ENCODE measurements at regions of chr10 and their contacts with region 1.

Region 1: DNA sequence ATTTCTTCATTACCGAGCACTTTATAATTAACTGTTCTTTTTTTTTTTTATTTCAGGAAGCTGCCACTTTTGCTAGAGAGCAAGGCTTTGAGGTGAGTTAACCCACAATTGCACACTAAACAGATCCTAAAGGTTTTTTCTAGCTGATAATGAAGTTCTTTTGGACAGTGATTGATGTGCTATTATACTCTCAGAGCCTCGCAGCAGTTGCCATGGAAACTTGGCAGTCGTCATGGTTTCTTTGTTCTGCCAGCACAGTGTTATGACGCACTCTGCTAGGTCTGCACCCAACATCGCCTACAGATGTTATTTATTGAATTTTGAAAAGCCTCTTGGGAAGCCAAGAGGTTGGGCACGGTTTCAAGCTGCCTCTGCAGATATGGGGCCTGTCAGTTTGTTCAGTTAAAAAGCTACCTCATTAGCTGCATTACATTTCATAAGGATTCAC is 237.2 kb upstream of the KAT6B start:
- DNase-seq: peak; percentile 41 to 97 (median 92)
- ATAC-seq: peak; percentile 88
- H3K4me3 ChIP-seq: no peak overlapping the region
- H3K4me3 Mint-ChIP-seq: peak overlapping the region in 8 of 10 donors; percentile 6 to 75 (median 60)
- H3K27ac ChIP-seq: peak overlapping the region; percentile 69
- H3K27ac Mint-ChIP-seq: peak overlapping the region; percentile 70 to 97 (median 93)
- H3K4me1 ChIP-seq: peaks cover 37 to 42% of the 10 kb centered on the region in 2 donors
- H3K4me1 Mint-ChIP-seq: peaks cover 21 to 66% (median 59%) of the 10 kb centered on the region in 7 donors
- H3K27me3 ChIP-seq: no peaks in the 10 kb centered on the region
- H3K27me3 Mint-ChIP-seq: no peaks in the 10 kb centered on the region

Region 2: DNA sequence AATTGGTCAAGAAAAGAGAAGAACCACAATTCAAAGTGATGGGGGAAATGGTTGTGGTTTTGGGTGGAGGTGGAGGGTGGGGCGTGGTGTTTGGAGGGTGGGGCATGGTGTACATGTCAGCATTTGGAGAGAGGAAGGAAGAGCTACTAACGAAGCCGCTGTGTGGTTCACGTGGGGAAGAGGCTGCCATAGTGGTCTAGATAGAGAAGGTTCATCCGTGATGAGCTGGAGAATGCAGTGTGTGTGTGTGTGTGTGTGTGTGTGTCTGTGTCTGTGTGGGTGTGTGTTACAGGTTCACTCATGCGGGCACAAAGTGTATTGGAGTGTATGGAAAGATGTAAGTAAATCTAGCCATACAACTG is 597.4 kb before region 1 on chr10:
- CTCF ChIA-PET with region 1: no interaction called
- POLR2A ChIA-PET with region 1: no interaction called
- intact Hi-C with region 1: loop called (anchors 1 to 10 kb)
- DNase-seq: peak; percentile 31 to 87 (median 79)
- ATAC-seq: peak; percentile 100
- H3K4me3 ChIP-seq: no peak overlapping the region
- H3K4me3 Mint-ChIP-seq: peak overlapping the region; percentile 1 to 72 (median 60)
- H3K27ac ChIP-seq: no peak overlapping the region
- H3K27ac Mint-ChIP-seq: peak overlapping the region; percentile 11 to 88 (median 82)
- H3K4me1 ChIP-seq: peaks cover 20 to 21% of the 10 kb centered on the region in 2 donors
- H3K4me1 Mint-ChIP-seq: peaks cover 26 to 59% (median 42%) of the 10 kb centered on the region in 7 donors
- H3K27me3 ChIP-seq: no peaks in the 10 kb centered on the region
- H3K27me3 Mint-ChIP-seq: no peaks in the 10 kb centered on the region

Region 3: GRCh38 chr10:74176380-74177139 is 412.7 kb before region 1 on chr10:
- CTCF ChIA-PET with region 1: no interaction called
- POLR2A ChIA-PET with region 1: no interaction called
- intact Hi-C with region 1: loop called (anchors 2 to 5 kb)
- DNase-seq: peak; percentile 90 to 96 (median 95)
- ATAC-seq: peak; percentile 98
- H3K4me3 ChIP-seq: peak overlapping the region; percentile 84
- H3K4me3 Mint-ChIP-seq: peak overlapping the region; percentile 87 to 98 (median 93)
- H3K27ac ChIP-seq: peak overlapping the region; percentile 86
- H3K27ac Mint-ChIP-seq: peak overlapping the region; percentile 94 to 98 (median 97)
- H3K4me1 ChIP-seq: peaks cover 6 to 7% of the 10 kb centered on the region in 2 donors
- H3K4me1 Mint-ChIP-seq: peaks cover 14 to 46% (median 40%) of the 10 kb centered on the region in 7 donors
- H3K27me3 ChIP-seq: no peaks in the 10 kb centered on the region
- H3K27me3 Mint-ChIP-seq: no peaks in the 10 kb centered on the region

Region 4: GRCh38 chr10:74213571-74214162 is 375.6 kb before region 1 on chr10:
- CTCF ChIA-PET with region 1: no interaction called
- POLR2A ChIA-PET with region 1: no interaction called
- intact Hi-C with region 1: no loop called
- DNase-seq: peak in 7 of 9 donors; percentile 26 to 60 (median 42)
- ATAC-seq: peak; percentile 78
- H3K4me3 ChIP-seq: no peak overlapping the region
- H3K4me3 Mint-ChIP-seq: no peak overlapping the region
- H3K27ac ChIP-seq: no peak overlapping the region
- H3K27ac Mint-ChIP-seq: peak overlapping the region in 1 of 9 donors; percentile 0
- H3K4me1 ChIP-seq: no peaks in the 10 kb centered on the region
- H3K4me1 Mint-ChIP-seq: peaks cover 7 to 16% (median 12%) of the 10 kb centered on the region in 7 donors
- H3K27me3 ChIP-seq: no peaks in the 10 kb centered on the region
- H3K27me3 Mint-ChIP-seq: no peaks in the 10 kb centered on the region

Region 5: DNA sequence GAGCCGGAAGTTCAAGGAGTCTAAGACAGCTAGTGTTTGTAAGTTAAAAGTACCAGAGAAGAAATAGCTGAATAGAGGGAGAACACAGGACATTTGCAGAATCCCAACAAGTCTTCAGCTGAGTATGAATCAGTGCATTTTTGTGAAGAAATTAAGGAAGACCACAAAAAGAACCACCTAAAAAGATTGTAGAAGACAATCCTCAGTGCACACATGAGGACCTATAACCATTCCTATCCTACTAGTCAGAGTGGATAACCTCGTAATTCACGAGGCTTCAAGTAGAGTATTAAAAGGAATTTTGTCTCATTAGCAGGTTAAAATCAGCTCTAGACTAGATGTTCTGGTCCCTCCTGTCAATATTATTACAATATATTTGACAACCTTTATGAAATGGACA is 58.3 kb before region 1 on chr10:
- CTCF ChIA-PET with region 1: no interaction called
- POLR2A ChIA-PET with region 1: no interaction called
- intact Hi-C with region 1: loop called (anchors 10 kb)
- DNase-seq: no peak
- ATAC-seq: no peak
- H3K4me3 ChIP-seq: no peak overlapping the region
- H3K4me3 Mint-ChIP-seq: no peak overlapping the region
- H3K27ac ChIP-seq: no peak overlapping the region
- H3K27ac Mint-ChIP-seq: no peak overlapping the region
- H3K4me1 ChIP-seq: no peaks in the 10 kb centered on the region
- H3K4me1 Mint-ChIP-seq: peaks cover 0 to 4% (median under 1%) of the 10 kb centered on the region in 7 donors
- H3K27me3 ChIP-seq: no peaks in the 10 kb centered on the region
- H3K27me3 Mint-ChIP-seq: no peaks in the 10 kb centered on the region

Region 6: DNA sequence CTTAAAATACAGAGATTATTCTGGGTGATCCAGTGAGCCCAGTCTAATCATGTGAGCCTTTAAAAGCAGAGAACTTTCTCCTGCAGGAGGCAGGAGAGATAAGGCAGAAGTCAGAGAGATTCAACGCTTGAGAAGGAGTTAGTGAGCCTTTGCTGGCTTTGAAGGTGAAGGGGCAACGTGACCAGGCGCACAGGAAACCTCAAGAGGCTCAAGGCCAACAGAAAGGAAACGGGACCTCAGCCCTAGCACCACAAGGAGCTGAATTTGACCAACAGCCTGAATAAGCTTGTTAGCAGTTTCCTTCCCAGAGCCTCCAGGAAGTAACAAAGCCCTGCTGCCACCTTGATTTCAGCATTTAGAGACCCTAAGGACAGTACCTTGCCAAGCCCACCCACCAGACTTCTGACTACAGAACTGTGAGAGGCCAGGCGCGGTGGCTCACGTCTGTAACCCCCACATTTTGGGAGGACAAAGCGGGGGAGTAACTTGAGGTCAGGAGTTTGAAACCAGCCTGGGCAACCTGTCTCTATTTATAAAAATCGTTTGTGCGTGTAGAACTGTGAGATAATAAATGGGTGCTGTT is 149.8 kb after region 1 on chr10:
- CTCF ChIA-PET with region 1: no interaction called
- POLR2A ChIA-PET with region 1: no interaction called
- intact Hi-C with region 1: loop called (anchors 5 kb)
- DNase-seq: peak in 7 of 9 donors; percentile 4 to 40 (median 17)
- ATAC-seq: peak; percentile 73
- H3K4me3 ChIP-seq: no peak overlapping the region
- H3K4me3 Mint-ChIP-seq: peak overlapping the region in 9 of 10 donors; percentile 17 to 56 (median 34)
- H3K27ac ChIP-seq: no peak overlapping the region
- H3K27ac Mint-ChIP-seq: peak overlapping the region; percentile 44 to 87 (median 58)
- H3K4me1 ChIP-seq: peaks cover 7 to 15% of the 10 kb centered on the region in 2 donors
- H3K4me1 Mint-ChIP-seq: peaks cover 15 to 26% (median 17%) of the 10 kb centered on the region in 7 donors
- H3K27me3 ChIP-seq: no peaks in the 10 kb centered on the region
- H3K27me3 Mint-ChIP-seq: no peaks in the 10 kb centered on the region